Spleen (tissue), 13 donors: ENCODE measurements at regions of chr1 and their contacts with region 1.

Region 1: DNA sequence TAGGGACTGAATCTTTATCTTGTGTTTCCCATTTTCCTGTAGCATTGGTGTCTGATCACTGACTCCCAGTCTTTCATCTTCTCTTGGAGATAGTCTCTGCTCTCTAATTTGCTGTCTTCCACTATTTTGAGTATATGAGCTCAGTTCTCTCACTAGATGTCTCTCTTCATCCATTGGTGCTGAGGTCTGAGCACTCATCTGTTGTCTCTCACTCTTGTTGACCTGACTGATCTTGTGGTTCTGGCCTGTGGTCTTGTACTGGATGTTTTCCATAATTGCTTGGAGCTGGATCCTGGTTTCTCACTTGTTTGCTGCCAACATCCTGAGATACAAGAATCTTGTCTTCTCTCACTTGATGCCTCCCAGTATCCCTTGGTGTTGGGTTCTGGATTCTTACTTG is 25.1 kb upstream of the S100A11 start:
- DNase-seq: no peak
- H3K4me3 ChIP-seq: no peak overlapping the region
- H3K27ac ChIP-seq: no peak overlapping the region
- H3K4me1 ChIP-seq: no peaks in the 10 kb centered on the region
- H3K27me3 ChIP-seq: peaks cover 0 to 80% (median 1%) of the 10 kb centered on the region in 7 donors
- CTCF ChIP-seq: no peak
- POLR2A ChIP-seq: no peak

Region 2: DNA sequence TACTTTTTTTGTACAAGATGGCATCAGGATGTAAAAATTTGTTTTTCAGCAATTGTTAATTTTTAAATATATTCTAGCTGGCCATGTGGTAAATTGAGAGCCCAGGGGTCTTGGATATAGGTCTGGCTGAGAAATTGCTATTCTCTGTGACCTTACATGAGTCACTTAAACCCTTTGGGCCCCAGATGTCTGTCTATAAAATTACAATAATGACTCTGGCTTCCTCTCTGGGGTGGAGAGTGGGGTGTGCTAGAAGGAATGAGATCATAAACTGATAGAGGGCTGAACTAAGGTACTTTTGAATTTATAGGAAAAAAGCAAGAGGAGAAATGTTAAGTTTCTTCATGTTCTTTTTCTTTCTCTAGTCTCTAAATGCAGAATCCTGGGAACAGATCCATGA is 65.7 kb after region 1 on chr1:
- intact Hi-C with region 1: loop called (anchors 10 kb)
- DNase-seq: no peak
- H3K4me3 ChIP-seq: no peak overlapping the region
- H3K27ac ChIP-seq: no peak overlapping the region
- H3K4me1 ChIP-seq: no peaks in the 10 kb centered on the region
- H3K27me3 ChIP-seq: peaks cover 0 to 77% (median 11%) of the 10 kb centered on the region in 7 donors
- CTCF ChIP-seq: no peak
- POLR2A ChIP-seq: no peak